ENCODE measurements at regions of chr5 and their contacts with region 1.

Region 1: DNA sequence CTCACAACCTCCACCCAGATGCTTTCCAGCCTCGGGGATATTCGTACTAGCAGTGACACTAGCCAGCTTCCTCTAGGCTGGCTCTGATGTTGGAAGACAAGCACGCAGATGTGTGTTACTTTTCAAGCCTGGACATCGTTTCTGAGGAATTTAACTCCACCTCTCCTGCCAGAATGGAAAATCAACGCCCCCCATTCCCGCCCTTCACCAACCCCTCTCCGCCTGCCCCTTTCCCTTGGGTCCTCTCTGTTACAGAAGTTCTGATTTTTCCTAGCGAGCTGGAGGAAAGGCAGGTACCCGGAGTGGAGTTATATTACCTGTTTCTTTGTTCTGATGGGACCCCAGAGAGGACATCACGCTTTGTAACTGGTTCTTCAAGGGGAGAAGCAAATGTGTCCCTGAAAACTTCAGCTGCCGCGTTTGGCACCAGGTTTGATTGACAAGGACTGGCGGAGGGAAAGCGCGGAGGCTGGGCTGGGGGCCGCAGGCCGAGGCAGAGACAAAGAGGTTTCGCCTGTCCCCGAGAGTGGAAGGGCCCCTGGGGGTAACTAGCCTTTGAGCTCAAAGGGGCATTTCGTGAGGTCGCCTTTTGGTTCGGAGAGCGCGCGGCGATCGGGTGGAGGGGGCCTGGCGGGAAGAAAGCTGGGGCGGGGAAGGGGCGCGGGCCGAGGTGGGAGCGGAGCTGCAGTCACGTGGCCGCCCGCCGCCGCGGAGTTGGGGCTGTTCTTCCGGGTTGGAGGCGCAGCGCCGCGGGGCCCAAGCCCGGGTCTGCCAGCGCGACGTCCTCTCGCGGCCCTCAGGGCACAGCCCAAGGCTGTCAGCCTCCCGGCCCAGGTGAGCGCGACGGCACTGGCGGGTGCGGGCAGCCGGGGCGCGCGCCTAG is at the start of gene NNT:
- DNase-seq: peak; percentile 86
- CTCF ChIP-seq: no peak

Region 2: DNA sequence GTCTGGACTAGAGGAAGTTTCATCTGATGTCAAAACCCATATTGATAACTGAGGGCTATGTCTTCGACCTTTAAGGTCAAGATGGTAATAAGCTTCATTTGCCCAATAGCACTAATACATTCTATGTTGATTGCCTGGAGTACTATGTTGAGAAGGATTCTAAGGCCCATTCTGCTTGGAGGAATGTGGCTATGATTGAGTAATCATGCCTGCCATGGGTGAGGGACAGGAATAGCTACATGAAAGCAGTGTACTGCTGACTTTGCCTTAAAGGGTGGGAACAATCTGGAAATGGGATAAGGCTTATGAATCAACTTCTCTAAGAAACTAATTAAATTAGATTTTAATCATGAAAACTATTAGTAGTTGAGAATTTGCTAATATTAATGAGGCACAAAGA is 13.8 kb after region 1 on chr5:
- CTCF ChIA-PET with region 1: interaction called, 13 read pairs
- POLR2A ChIA-PET with region 1: no interaction called
- DNase-seq: no peak
- CTCF ChIP-seq: no peak

Measured in GM10248 (cell line).